Natural killer cell (primary cell): ENCODE measurements at regions of chr18 and their contacts with region 1.

Region 1: GRCh38 chr18:63963615-63964256 is 6.1 kb upstream of the SERPINB8 start:
- DNase-seq: peak in 1 of 2 donors; percentile 79
- ATAC-seq: peak; percentile 65 to 80 (median 73)
- H3K4me3 ChIP-seq: no peak overlapping the region
- H3K4me3 Mint-ChIP-seq: no peak overlapping the region
- H3K27ac ChIP-seq: no peak overlapping the region
- H3K27ac Mint-ChIP-seq: no peak overlapping the region
- H3K4me1 ChIP-seq: no peaks in the 10 kb centered on the region
- H3K4me1 Mint-ChIP-seq: no peaks in the 10 kb centered on the region
- H3K27me3 ChIP-seq: no peaks in the 10 kb centered on the region
- H3K27me3 Mint-ChIP-seq: peaks cover 25 to 30% of the 10 kb centered on the region in 2 donors
- CTCF ChIP-seq: peak; percentile 77

Region 2: DNA sequence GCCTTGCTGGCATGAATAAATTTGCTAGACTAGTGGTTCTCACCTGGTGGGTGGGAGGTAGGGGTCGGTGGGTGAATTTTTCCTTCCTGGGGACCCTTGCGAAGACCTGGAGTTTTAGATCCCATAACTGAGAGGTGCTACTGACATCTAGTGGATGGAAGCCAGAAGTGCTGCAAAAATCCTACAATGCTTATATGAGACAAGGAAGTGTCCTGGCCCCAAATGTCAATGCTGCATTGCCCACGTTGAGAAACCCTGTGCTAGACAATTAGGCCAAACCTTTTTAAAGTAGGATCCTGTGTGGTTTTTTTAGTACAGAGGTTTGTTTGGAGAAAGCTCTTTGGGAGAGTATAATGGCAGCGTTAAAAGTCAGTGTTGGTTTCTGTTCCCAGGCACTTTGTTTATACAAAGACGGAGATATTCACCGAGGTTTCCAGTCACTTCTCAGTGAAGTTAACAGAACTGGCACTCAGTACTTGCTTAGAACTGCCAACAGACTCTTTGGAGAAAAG is 15.7 kb after region 1 on chr18:
- intact Hi-C with region 1: loop called (anchors 1 kb)
- DNase-seq: peak in 1 of 2 donors; percentile 74
- ATAC-seq: peak; percentile 59 to 80 (median 77)
- H3K4me3 ChIP-seq: no peak overlapping the region
- H3K4me3 Mint-ChIP-seq: no peak overlapping the region
- H3K27ac ChIP-seq: no peak overlapping the region
- H3K27ac Mint-ChIP-seq: no peak overlapping the region
- H3K4me1 ChIP-seq: peaks cover 3% of the 10 kb centered on the region
- H3K4me1 Mint-ChIP-seq: peaks cover 12 to 13% of the 10 kb centered on the region in 2 donors
- H3K27me3 ChIP-seq: no peaks in the 10 kb centered on the region
- H3K27me3 Mint-ChIP-seq: no peaks in the 10 kb centered on the region
- CTCF ChIP-seq: peak; percentile 78

Region 3: DNA sequence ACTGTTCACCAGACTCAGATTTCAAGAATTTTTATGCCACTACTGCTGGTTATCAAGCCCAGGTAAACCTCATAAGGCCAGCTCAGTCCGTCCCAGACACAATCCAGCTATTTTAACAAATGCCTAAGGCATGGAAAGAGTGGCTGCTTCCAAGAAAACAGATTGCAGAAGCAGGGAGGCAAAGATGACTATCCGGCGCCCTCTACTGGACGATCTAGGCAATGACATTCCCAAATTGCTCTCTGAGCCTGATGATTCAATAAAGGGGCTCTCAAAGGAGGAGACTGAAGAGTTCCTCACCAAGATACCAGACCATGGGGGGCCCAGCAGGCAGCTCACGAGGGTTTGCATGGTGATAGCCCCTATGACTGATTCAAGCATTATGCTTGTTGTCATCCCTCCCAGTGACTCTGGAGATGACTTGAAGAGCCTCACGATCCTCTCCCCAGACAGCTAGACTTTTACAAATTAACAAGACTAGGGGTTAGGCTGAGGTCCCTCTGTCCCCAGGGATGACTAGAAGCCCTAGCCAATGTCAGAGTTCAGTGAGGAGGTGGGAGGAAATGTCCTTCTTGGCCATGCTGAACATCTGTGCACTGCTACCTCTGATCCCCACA is 31.2 kb after region 1 on chr18:
- intact Hi-C with region 1: loop called (anchors 2 kb)
- DNase-seq: peak in 1 of 2 donors; percentile 63
- ATAC-seq: peak in 2 of 3 donors; percentile 61 to 64
- H3K4me3 ChIP-seq: no peak overlapping the region
- H3K4me3 Mint-ChIP-seq: no peak overlapping the region
- H3K27ac ChIP-seq: no peak overlapping the region
- H3K27ac Mint-ChIP-seq: no peak overlapping the region
- H3K4me1 ChIP-seq: no peaks in the 10 kb centered on the region
- H3K4me1 Mint-ChIP-seq: no peaks in the 10 kb centered on the region
- H3K27me3 ChIP-seq: no peaks in the 10 kb centered on the region
- H3K27me3 Mint-ChIP-seq: peaks cover 0 to 2% of the 10 kb centered on the region in 2 donors
- CTCF ChIP-seq: peak; percentile 83